ENCODE measurements at regions of chr5 and their contacts with region 1.

Region 1: DNA sequence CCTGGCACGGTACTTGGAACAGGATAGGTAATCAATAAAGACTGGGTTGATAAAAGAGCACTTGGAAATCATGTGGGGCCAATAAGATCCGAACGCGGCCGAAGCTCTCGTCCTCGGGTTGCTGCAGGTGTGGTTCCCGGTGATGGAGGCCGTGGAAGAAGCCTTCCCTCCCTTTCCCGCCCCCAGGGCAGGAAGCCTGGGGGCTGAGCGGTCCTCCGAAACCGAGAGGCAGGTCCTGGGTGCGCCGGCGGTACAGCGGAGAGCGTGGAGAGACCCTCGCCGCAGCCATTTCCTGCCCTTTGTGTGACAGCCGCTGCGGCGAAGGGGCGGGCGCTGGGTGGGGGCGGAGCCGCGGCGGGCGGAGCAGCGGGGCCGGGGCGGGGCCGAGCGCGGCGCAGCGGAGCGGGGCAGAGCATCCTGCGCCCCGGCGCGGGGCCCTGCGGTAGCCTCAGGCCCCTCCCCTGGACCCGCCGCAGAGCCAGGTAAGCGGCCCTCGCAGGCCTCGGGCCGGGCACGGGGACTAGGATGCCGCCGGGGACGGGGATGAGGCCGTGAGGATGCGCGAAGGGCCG is at the start of gene CYFIP2:
- DNase-seq: peak; percentile 31
- H3K4me3 ChIP-seq: peak within 1 kb of the TSS; percentile 39 to 69 (median 67)
- H3K27ac ChIP-seq: no peak within 1 kb of the TSS
- H3K4me1 ChIP-seq: peaks cover 14% of the 10 kb centered on the region
- H3K27me3 ChIP-seq: no peaks in the 10 kb centered on the region
- CTCF ChIP-seq: no peak
- total RNA-seq, gene CYFIP2: 5.5 to 16.0 TPM

Region 2: DNA sequence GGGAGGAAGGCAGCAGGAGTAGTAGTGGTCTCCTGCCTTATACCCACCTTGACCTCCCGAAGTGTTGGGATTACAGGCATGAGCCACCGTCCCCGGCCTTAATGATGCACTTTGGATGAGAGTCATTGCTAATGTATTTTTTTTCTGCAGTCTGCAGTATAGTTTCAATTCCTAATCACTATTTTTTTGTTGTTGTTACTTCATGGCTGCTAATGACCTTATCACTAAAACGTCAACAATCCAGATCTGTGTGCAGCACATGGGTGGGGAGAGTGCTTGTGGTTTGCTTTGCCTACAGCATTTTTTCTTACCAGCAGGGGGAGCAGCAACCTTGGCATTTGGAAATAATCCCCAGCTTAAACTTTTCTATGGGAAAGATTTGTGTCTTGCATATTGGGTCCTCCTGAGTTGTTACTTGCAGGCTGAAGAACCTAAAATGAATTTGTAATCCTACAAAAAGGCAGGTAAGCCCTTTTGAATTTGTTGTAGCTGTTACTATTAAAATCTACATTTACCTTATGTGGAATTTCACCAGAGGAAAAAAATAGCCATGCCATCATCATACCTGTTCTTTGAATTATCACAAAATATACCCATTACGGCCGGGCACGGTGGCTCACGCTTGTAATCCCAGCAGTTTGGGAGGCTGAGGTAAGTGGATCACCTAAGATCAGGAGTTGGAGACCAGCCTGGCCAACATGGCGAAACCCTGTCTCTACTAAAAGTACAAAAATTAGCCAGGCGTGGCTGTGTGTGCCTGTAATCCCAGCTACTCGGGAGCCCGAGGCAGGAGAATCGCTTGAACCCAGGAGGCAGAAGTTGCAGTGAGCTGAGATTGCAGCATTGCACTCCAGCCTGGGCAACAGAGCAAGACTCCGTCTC is 116.8 kb before region 1 on chr5:
- CTCF ChIA-PET with region 1: no interaction called
- dilution Hi-C with region 1: no loop called
- in situ Hi-C with region 1: no loop called
- intact Hi-C with region 1: loop called (anchors 5 kb)
- DNase-seq: peak; percentile 46
- H3K4me3 ChIP-seq: no peak overlapping the region
- H3K27ac ChIP-seq: no peak overlapping the region
- H3K4me1 ChIP-seq: no peaks in the 10 kb centered on the region
- H3K27me3 ChIP-seq: no peaks in the 10 kb centered on the region
- CTCF ChIP-seq: peak; percentile 90 to 94

Region 3: GRCh38 chr5:157245477-157245876 is 20.3 kb before region 1 on chr5:
- CTCF ChIA-PET with region 1: no interaction called
- dilution Hi-C with region 1: no loop called
- in situ Hi-C with region 1: no loop called
- intact Hi-C with region 1: no loop called
- DNase-seq: no peak
- H3K4me3 ChIP-seq: no peak overlapping the region
- H3K27ac ChIP-seq: no peak overlapping the region
- H3K4me1 ChIP-seq: no peaks in the 10 kb centered on the region
- H3K27me3 ChIP-seq: peaks cover 2% of the 10 kb centered on the region
- CTCF ChIP-seq: no peak

Region 4: DNA sequence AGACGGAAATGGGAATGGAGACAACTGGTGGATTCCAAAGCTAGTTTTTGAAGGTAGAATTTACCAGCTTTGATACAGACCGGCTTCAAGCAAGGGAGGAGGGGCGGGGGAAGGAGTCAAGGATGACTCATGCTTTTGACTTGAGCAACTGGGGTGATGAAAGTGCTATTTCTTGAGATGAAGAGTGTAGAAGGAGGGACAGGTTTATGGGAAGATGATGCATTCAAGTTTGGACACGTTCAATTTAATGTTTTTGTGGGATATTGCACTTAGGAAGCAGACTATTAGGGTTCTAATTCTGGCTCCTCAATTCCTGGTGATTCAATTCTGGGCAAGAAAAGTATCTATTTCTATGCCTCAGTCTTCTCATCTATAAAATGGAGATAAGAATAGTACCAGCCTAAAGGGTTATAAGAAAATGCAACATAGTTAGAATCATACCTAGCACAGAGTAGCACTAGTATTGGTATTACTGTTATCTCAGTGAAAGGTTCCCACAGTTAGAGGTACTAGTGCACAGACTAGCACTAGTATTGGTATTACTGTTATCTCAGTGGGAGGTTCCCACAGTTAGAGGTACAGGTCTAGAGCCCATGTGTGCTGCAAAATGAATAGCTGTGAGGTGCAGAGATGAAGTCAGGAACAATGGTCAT is 198.8 kb after region 1 on chr5:
- CTCF ChIA-PET with region 1: no interaction called
- dilution Hi-C with region 1: no loop called
- in situ Hi-C with region 1: no loop called
- intact Hi-C with region 1: loop called (anchors 5 kb)
- DNase-seq: peak; percentile 96
- H3K4me3 ChIP-seq: no peak overlapping the region
- H3K27ac ChIP-seq: peak overlapping the region; percentile 78
- H3K4me1 ChIP-seq: peaks cover 50% of the 10 kb centered on the region
- H3K27me3 ChIP-seq: no peaks in the 10 kb centered on the region
- CTCF ChIP-seq: no peak

Measured in mammary epithelial cell (primary cell).